Activated CD4-positive, alpha-beta T cell treated with anti-CD3 and anti-CD28 coated beads for 36 hours (primary cell): ENCODE measurements at regions of chr6 and their contacts with region 1.

Region 1: DNA sequence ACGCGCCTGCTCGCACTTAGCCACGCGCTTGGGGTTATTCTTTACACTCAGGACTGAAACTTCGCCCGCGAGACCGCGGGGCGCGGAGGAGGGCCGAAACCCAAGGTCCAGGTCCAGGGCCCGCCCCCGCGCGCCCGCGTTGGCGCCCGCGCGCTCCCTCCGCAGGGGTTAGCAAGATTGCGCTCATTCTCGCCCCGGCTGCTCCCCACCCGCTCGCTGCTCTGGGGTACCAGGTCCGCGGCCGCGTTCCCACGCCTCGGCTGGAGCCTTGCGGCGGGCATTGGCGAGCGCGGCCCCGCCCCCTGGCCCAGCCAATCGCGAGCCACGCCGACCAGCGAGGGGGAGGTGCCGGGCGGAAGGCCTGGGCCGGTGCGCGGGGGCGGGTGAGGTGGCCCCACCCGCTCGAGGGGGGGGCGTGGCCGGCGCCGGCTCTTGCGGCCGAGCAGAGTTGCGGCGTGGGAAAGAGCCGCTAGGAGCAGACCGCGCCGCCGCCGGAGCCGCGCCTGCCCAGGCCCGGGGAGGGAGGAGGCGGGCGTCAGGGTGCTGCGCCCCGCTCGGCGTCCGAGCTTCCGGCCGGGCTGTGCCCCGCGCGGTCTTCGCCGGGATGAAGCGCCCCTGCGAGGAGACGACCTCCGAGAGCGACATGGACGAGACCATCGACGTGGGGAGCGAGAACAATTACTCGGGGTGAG is at the start of gene HEY2:
- DNase-seq: peak; percentile 91
- ATAC-seq: peak; percentile 78
- H3K4me3 Mint-ChIP-seq: peak within 1 kb of the TSS; percentile 74
- H3K27ac Mint-ChIP-seq: no peak within 1 kb of the TSS
- H3K4me1 Mint-ChIP-seq: peaks cover 35% of the 10 kb centered on the region
- H3K27me3 Mint-ChIP-seq: peaks cover 57% of the 10 kb centered on the region
- total RNA-seq, gene HEY2: not detected

Region 2: DNA sequence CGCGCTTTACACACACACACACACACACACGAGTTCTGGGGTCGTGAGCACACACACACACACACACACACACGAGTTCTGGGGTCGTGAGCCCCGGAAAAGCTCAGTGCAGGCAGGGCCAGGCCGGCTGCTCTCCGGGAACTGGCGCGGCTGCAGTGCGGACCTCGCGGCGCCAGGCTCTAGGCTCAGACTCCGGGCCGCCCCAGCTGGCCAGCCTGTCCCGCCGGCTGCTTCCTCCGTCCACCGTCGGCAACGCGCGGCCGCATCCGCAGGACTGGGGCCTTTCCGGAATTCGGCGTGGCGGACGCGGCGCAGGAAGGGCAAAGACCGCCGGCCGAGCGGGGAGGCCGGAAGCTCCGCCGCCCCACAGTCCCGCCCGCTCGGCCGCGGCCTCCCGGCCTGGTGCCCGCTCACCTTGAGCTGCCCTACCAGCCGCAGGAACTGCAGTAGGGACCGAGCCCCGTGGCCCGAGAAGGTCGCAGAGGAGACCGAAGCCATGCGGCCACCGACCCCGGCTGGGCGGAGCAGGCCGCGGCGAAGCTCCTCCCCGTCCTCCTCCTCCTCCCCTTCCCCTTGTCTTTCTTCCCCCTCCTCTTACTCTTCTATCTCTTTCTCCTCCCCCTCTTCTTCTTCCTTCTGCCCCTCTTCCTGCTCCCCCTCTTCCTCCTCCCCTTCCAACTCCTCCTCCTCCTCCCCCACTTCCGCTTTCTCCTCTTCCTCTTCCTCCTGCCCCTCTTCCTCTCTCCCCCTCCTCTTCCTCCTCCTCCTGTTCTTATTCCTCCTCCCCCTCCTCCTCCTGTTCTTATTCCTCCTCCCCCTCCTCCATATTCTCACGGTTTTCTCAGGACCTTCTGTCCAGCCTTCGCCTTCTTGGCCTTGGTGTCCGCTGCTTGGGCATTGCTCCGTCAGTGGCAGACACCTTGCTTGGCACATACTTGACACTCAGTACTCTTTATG is 447.6 kb before region 1 on chr6 and contains the start of gene HDDC2:
- CTCF ChIA-PET with region 1: interaction called, 3 read pairs
- POLR2A ChIA-PET with region 1: no interaction called
- intact Hi-C with region 1: loop called in 1 of 2 experiments (anchors 2 kb)
- DNase-seq: peak; percentile 64
- ATAC-seq: peak; percentile 79
- H3K4me3 Mint-ChIP-seq: peak within 1 kb of the TSS; percentile 94
- H3K27ac Mint-ChIP-seq: peak within 1 kb of the TSS; percentile 98
- H3K4me1 Mint-ChIP-seq: peaks cover 46% of the 10 kb centered on the region
- H3K27me3 Mint-ChIP-seq: no peaks in the 10 kb centered on the region
- total RNA-seq, gene HDDC2: 96.7 to 120 TPM

Region 3: GRCh38 chr6:125512621-125513020 is 236.7 kb before region 1 on chr6:
- CTCF ChIA-PET with region 1: no interaction called
- POLR2A ChIA-PET with region 1: no interaction called
- intact Hi-C with region 1: loop called (anchors 5 to 10 kb)
- DNase-seq: no peak
- ATAC-seq: no peak
- H3K4me3 Mint-ChIP-seq: no peak overlapping the region
- H3K27ac Mint-ChIP-seq: no peak overlapping the region
- H3K4me1 Mint-ChIP-seq: no peaks in the 10 kb centered on the region
- H3K27me3 Mint-ChIP-seq: peaks cover 4% of the 10 kb centered on the region

Region 4: GRCh38 chr6:125779924-125780539 is 30.7 kb after region 1 on chr6:
- CTCF ChIA-PET with region 1: interaction called, 7 read pairs
- POLR2A ChIA-PET with region 1: no interaction called
- intact Hi-C with region 1: loop called in 1 of 2 experiments (anchors 1 kb)
- DNase-seq: peak; percentile 89
- ATAC-seq: peak; percentile 77
- H3K4me3 Mint-ChIP-seq: no peak overlapping the region
- H3K27ac Mint-ChIP-seq: no peak overlapping the region
- H3K4me1 Mint-ChIP-seq: peaks cover 20% of the 10 kb centered on the region
- H3K27me3 Mint-ChIP-seq: no peaks in the 10 kb centered on the region

Region 5: DNA sequence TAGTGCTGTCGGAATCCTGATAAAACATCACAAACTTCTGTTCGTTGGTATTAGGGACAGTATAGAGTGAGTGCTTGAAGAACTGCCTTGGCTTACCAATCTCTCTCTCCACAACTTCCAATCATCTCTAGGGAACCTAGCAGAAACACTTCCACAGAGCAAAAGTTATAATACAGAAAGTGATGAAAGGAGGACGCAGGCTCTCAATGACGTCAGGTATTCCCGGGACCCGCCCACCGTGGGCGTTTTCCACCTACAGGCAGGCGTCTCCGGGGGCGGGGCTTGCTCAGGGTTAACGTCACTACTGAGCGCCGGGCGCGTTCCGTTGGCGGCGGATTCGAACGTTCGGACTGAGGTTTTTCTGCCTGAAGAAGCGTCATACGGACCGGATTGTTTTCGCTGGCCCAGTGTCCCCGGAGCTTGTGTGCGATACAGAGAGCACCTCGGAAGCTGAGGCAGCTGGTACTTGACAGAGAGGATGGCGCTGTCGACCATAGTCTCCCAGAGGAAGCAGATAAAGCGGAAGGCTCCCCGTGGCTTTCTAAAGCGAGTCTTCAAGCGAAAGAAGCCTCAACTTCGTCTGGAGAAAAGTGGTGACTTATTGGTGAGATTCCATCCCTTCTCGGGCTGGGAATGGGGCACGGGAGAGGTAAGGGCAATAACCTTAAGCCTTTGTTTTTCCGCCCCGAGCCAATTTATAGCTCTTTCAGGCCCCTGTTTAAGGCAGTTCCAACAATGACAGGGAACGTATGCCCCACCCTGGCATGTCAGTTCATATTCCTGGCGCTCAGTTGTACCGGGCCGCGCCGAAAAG is 590.7 kb after region 1 on chr6 and contains the start of gene CENPW:
- CTCF ChIA-PET with region 1: no interaction called
- POLR2A ChIA-PET with region 1: no interaction called
- intact Hi-C with region 1: loop called in 1 of 2 experiments (anchors 1 kb)
- DNase-seq: peak; percentile 97
- ATAC-seq: peak; percentile 92
- H3K4me3 Mint-ChIP-seq: no peak within 1 kb of the TSS
- H3K27ac Mint-ChIP-seq: no peak within 1 kb of the TSS
- H3K4me1 Mint-ChIP-seq: peaks cover 13% of the 10 kb centered on the region
- H3K27me3 Mint-ChIP-seq: no peaks in the 10 kb centered on the region
- total RNA-seq, gene CENPW: 44.1 to 63.6 TPM